ENCODE measurements at regions of chr2 and their contacts with region 1.

Region 1: GRCh38 chr2:122451040-122451439 is 695.6 kb downstream of the TSN start:
- DNase-seq: no peak
- ATAC-seq: no peak
- H3K4me3 ChIP-seq: no peak overlapping the region
- H3K27ac ChIP-seq: no peak overlapping the region
- H3K4me1 ChIP-seq: no peaks in the 10 kb centered on the region
- H3K27me3 ChIP-seq: no peaks in the 10 kb centered on the region
- CTCF ChIP-seq: peak in 6 of 12 donors; percentile 16 to 34 (median 19)
- POLR2A ChIP-seq: no peak

Region 2: GRCh38 chr2:121974897-121975661 is 476.0 kb before region 1 on chr2:
- intact Hi-C with region 1: loop called in 2 of 10 experiments (anchors 5 to 10 kb)
- DNase-seq: peak in 4 of 5 donors; percentile 37 to 42 (median 38)
- ATAC-seq: peak; percentile 56 to 93 (median 92)
- H3K4me3 ChIP-seq: peak overlapping the region in 8 of 12 donors; percentile 29 to 58 (median 42)
- H3K27ac ChIP-seq: no peak overlapping the region
- H3K4me1 ChIP-seq: peaks cover 0 to 28% (median 3%) of the 10 kb centered on the region in 12 donors
- H3K27me3 ChIP-seq: peaks cover 0 to 6% (median 0%) of the 10 kb centered on the region in 9 donors
- CTCF ChIP-seq: peak; percentile 44 to 74 (median 60)
- POLR2A ChIP-seq: no peak

Measured in heart left ventricle (tissue), 16 donors.